ENCODE measurements at regions of chr1 and their contacts with region 1.

Region 1: GRCh38 chr1:218345673-218346390 is 696 bp downstream of the TGFB2 start:
- DNase-seq: peak; percentile 74
- H3K4me3 ChIP-seq: peak overlapping the region; percentile 86 to 95 (median 88)
- H3K27ac ChIP-seq: peak overlapping the region; percentile 85
- H3K4me1 ChIP-seq: peaks cover 32% of the 10 kb centered on the region
- H3K27me3 ChIP-seq: no peaks in the 10 kb centered on the region
- CTCF ChIP-seq: no peak
- POLR2A ChIP-seq: peak; percentile 75

Region 2: GRCh38 chr1:217989510-217989909 is 356.3 kb before region 1 on chr1:
- CTCF ChIA-PET with region 1: no interaction called
- POLR2A ChIA-PET with region 1: no interaction called
- dilution Hi-C with region 1: no loop called
- intact Hi-C with region 1: no loop called
- DNase-seq: no peak
- H3K4me3 ChIP-seq: no peak overlapping the region
- H3K27ac ChIP-seq: no peak overlapping the region
- H3K4me1 ChIP-seq: no peaks in the 10 kb centered on the region
- H3K27me3 ChIP-seq: no peaks in the 10 kb centered on the region
- CTCF ChIP-seq: no peak
- POLR2A ChIP-seq: no peak

Region 3: DNA sequence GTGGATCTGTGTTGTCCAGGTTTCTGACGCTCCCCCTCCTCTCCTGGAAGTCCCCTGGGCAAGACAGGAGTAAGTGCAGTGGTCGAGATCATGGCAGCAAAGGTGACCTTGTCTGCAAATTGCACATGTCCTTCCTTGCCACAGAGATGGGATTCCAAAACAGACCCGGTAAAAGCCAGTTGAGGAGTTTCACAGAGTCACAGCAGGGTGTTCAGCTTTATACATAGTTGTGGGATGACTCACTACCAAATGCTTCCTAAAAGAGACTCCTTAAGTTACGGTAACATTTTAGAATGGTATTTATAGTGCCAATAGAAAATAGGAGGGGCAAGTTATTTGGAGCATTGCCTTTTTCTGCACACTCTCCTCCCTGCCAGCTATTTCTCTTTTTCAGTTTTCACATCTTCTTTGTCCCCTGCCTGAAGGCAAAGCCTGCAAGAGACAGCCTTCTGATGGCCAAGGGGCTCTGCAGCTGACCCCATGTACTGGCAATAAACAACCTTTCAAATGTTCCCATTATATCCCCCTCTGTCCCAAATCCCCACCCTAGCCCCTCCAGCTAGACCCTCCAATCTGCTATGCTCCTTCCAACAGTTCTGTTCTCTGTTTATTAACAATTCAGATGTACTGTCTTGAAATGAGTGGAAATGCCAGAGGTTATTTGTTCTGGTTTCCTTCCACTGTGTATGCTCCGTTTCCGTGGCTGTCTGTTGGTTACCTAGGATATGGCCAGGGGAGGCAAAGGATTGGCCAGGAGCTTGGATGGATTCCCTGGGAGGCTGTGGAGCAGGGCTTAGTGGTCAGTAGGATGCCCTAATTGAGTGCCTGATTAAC is 114.3 kb after region 1 on chr1:
- CTCF ChIA-PET with region 1: no interaction called
- POLR2A ChIA-PET with region 1: no interaction called
- dilution Hi-C with region 1: no loop called
- intact Hi-C with region 1: loop called (anchors 1 kb)
- DNase-seq: peak; percentile 82
- H3K4me3 ChIP-seq: peak overlapping the region in 1 of 3 experiments; percentile 44
- H3K27ac ChIP-seq: peak overlapping the region; percentile 98
- H3K4me1 ChIP-seq: peaks cover 44% of the 10 kb centered on the region
- H3K27me3 ChIP-seq: no peaks in the 10 kb centered on the region
- CTCF ChIP-seq: no peak
- POLR2A ChIP-seq: no peak

Region 4: GRCh38 chr1:218521375-218522169 is 175.7 kb after region 1 on chr1:
- CTCF ChIA-PET with region 1: interaction called, 4 read pairs
- POLR2A ChIA-PET with region 1: no interaction called
- dilution Hi-C with region 1: no loop called
- intact Hi-C with region 1: loop called (anchors 1 kb)
- DNase-seq: peak; percentile 65
- H3K4me3 ChIP-seq: no peak overlapping the region
- H3K27ac ChIP-seq: no peak overlapping the region
- H3K4me1 ChIP-seq: peaks cover 4% of the 10 kb centered on the region
- H3K27me3 ChIP-seq: no peaks in the 10 kb centered on the region
- CTCF ChIP-seq: peak; percentile 45 to 72
- POLR2A ChIP-seq: no peak

Region 5: DNA sequence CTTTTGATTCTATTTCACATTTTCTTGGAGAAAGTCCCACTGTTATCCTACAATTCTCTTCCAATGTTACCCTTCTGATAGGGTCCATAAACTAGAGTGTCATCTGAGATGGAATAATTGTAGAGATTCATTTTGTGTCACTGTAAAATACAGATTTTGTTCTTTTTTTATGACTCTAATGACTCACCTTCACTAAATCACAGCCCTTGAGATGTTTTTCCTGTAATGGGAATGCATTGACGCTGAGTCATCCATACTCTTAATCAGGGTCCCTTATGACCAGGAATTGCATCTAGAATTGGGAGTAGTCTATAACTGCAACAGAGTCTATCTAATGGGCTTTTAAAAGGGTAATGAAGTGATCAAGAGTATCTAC is 314.8 kb after region 1 on chr1:
- CTCF ChIA-PET with region 1: no interaction called
- POLR2A ChIA-PET with region 1: no interaction called
- dilution Hi-C with region 1: no loop called
- intact Hi-C with region 1: loop called (anchors 5 kb)
- DNase-seq: peak; percentile 91
- H3K4me3 ChIP-seq: no peak overlapping the region
- H3K27ac ChIP-seq: peak overlapping the region; percentile 64
- H3K4me1 ChIP-seq: peaks cover 26% of the 10 kb centered on the region
- H3K27me3 ChIP-seq: no peaks in the 10 kb centered on the region
- CTCF ChIP-seq: no peak
- POLR2A ChIP-seq: no peak

Region 6: GRCh38 chr1:218874313-218874712 is 528.5 kb after region 1 on chr1:
- CTCF ChIA-PET with region 1: interaction called, 3 read pairs
- POLR2A ChIA-PET with region 1: no interaction called
- dilution Hi-C with region 1: no loop called
- intact Hi-C with region 1: loop called (anchors 5 kb)
- DNase-seq: peak; percentile 90
- H3K4me3 ChIP-seq: no peak overlapping the region
- H3K27ac ChIP-seq: peak overlapping the region; percentile 72
- H3K4me1 ChIP-seq: peaks cover 20% of the 10 kb centered on the region
- H3K27me3 ChIP-seq: no peaks in the 10 kb centered on the region
- CTCF ChIP-seq: no peak
- POLR2A ChIP-seq: no peak

Region 7: GRCh38 chr1:219173758-219174588 is 828.1 kb after region 1 on chr1 and contains the start of gene LYPLAL1:
- CTCF ChIA-PET with region 1: no interaction called
- POLR2A ChIA-PET with region 1: no interaction called
- dilution Hi-C with region 1: no loop called
- intact Hi-C with region 1: loop called (anchors 1 kb)
- DNase-seq: peak; percentile 92
- H3K4me3 ChIP-seq: peak within 1 kb of the TSS; percentile 78 to 90 (median 86)
- H3K27ac ChIP-seq: peak within 1 kb of the TSS; percentile 80
- H3K4me1 ChIP-seq: peaks cover 15% of the 10 kb centered on the region
- H3K27me3 ChIP-seq: no peaks in the 10 kb centered on the region
- CTCF ChIP-seq: peak in 1 of 2 donors; percentile 7
- POLR2A ChIP-seq: peak; percentile 97
- total RNA-seq, gene LYPLAL1: 19.1 and 25.4 TPM in 2 replicates